Prostate gland (tissue), 2 donors: ENCODE measurements at regions of chr11 and their contacts with region 1.

Region 1: GRCh38 chr11:57597916-57598830 is 688 bp downstream of the SERPING1 start:
- DNase-seq: peak; percentile 59
- H3K4me3 ChIP-seq: peak overlapping the region; percentile 48
- H3K27ac ChIP-seq: peak overlapping the region; percentile 71 to 82
- H3K4me1 ChIP-seq: no peaks in the 10 kb centered on the region
- H3K27me3 ChIP-seq: no peaks in the 10 kb centered on the region
- CTCF ChIP-seq: no peak
- POLR2A ChIP-seq: peak; percentile 14

Region 2: DNA sequence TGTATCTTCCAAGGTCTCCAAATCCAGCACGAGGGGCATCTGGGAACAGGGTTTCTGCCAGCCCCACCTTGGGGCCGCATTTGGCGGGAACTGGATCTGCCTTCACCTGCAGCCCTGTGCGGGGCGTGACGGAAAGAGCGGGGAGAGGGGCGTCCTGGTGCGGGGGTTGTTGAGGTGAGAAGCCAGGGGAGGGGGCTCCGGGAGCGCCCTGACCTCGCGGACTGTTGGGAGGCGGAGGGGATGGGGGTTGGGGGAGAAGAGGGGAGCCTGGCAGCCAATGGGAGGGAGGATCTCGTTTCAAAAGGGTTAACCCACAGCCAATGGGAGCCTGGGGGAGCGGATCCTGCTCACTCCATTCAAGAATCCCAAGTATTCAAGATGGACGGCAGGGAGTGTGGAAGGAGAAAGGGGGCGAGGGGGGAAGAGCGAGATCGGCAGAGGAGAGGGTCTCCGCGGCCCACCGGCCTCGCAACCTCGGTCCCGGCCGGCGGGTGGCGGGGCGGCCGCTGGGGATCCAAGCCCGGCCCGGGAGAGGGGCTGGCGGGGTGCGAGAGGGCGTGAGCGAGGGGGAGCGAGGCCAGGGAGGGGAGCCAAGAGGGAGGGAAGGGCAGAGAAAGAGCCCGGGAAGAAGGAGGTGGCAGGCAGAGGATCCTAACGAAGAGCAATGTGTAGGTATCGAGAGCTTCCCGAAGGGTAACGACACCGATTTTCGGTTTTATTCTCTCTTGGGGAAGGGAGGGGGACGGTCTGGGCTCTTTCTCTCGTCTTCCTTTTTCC is 40.0 kb after region 1 on chr11:
- intact Hi-C with region 1: loop called (anchors 2 kb)
- DNase-seq: peak; percentile 74
- H3K4me3 ChIP-seq: peak overlapping the region; percentile 52 to 76
- H3K27ac ChIP-seq: peak overlapping the region; percentile 66 to 81
- H3K4me1 ChIP-seq: peaks cover 5% of the 10 kb centered on the region
- H3K27me3 ChIP-seq: no peaks in the 10 kb centered on the region
- CTCF ChIP-seq: peak in 1 of 4 experiments; percentile 16
- POLR2A ChIP-seq: peak; percentile 29